Mammary epithelial cell (primary cell): ENCODE measurements at regions of chr17 and their contacts with region 1.

Region 1: DNA sequence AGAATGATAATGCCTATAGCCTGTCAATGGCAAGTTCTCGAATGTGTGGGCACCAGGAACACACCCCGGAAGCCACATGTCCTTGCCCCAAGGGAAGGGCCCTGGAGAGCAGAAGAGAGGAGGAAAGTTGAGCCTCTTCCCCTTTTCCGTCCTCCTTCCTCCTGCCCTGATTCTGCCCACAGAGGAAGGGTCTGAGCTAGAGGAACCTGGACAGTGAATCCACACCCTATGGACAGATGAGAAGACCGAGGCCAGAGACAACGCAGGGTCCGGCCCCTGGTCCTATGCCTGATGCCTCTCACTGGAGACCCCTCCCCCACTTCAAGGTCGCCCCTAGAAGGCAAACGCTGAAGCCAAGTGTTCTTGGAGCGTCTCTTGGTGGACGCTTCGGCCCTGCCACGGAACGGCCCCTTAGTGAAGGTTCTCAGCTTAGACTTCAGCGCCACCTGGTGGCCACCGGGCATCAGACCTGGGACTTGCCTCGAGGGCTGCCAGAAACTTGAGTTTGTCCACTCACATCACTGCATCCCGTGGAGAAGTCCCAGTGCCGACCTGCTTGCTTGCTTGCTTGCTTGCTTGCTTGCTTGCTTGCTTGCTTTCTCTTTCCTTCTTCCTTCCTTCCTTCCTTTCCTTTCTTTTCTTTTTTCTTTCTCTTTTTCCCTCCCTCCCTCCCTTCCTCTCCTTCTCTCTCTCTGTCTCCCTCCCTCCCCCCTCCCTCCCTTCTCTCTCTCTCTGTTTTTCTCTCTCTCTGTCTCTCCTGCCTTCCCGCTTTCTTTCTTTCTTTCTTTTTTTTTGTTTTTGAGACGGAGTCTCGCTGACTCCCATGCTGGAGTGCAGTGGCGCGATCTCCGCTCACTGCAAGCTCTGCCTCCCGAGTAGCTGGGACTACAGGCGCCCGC is 20.6 kb upstream of the SPNS3 start:
- DNase-seq: peak; percentile 71
- H3K4me3 ChIP-seq: no peak overlapping the region
- H3K27ac ChIP-seq: no peak overlapping the region
- H3K4me1 ChIP-seq: peaks cover 6% of the 10 kb centered on the region
- H3K27me3 ChIP-seq: no peaks in the 10 kb centered on the region
- CTCF ChIP-seq: peak; percentile 91 to 92

Region 2: DNA sequence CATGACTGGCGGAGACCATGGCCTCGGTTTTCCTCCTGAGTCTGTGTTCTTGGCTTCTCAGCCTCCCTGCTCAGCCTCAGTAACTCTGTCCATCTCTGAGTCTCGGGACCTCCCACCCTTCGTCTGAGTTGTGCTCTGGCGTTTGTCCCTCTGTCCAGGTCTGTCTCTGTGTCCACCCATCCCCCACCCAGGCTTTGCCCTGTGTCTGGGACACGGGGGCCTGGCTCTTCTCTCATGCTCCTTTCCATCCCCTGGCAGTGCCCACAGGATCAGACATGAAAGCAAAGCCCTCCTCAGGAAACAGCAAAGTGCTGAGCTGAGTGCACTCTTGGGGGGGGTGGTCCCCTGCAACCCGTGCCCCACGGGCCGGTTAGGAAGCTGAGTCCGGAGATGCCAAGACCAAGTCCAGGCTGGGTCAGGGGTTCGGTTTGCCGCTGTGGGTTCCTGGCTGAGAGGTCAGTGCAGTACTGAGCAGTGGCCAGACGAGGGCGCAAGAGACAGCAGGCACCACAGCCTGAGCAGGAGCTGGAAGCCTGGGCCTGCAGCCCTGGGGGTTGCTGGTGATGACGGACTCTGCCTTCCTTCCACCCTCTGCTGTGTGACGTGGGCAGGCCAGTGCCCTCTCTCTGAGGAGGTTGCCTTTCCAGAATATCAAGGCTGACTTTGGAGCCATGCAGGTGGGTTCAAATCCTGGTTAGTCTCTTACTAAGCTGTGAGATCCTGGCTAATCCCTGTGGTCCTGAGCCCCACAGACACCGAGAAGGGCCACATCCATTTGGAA is 499.5 kb before region 1 on chr17:
- CTCF ChIA-PET with region 1: no interaction called
- dilution Hi-C with region 1: no loop called
- in situ Hi-C with region 1: no loop called
- intact Hi-C with region 1: loop called (anchors 1 kb)
- DNase-seq: peak; percentile 35
- H3K4me3 ChIP-seq: no peak overlapping the region
- H3K27ac ChIP-seq: no peak overlapping the region
- H3K4me1 ChIP-seq: no peaks in the 10 kb centered on the region
- H3K27me3 ChIP-seq: no peaks in the 10 kb centered on the region
- CTCF ChIP-seq: peak; percentile 97 to 98

Region 3: GRCh38 chr17:4199818-4200402 is 213.3 kb before region 1 on chr17:
- CTCF ChIA-PET with region 1: interaction called, 4 read pairs
- dilution Hi-C with region 1: no loop called
- in situ Hi-C with region 1: loop called in 1 of 2 experiments (anchors 10 kb)
- intact Hi-C with region 1: loop called (anchors 1 kb)
- DNase-seq: peak; percentile 13
- H3K4me3 ChIP-seq: no peak overlapping the region
- H3K27ac ChIP-seq: no peak overlapping the region
- H3K4me1 ChIP-seq: no peaks in the 10 kb centered on the region
- H3K27me3 ChIP-seq: no peaks in the 10 kb centered on the region
- CTCF ChIP-seq: peak; percentile 78 to 80

Region 4: GRCh38 chr17:4263282-4264215 is 149.6 kb before region 1 on chr17 and contains the start of gene ANKFY1:
- CTCF ChIA-PET with region 1: no interaction called
- dilution Hi-C with region 1: no loop called
- in situ Hi-C with region 1: no loop called
- intact Hi-C with region 1: loop called (anchors 5 kb)
- DNase-seq: peak; percentile 90
- H3K4me3 ChIP-seq: peak within 1 kb of the TSS; percentile 71 to 97 (median 86)
- H3K27ac ChIP-seq: peak within 1 kb of the TSS; percentile 79
- H3K4me1 ChIP-seq: peaks cover 22% of the 10 kb centered on the region
- H3K27me3 ChIP-seq: no peaks in the 10 kb centered on the region
- CTCF ChIP-seq: peak in 1 of 2 donors; percentile 24
- total RNA-seq, gene ANKFY1: 45.4 to 46.2 TPM

Region 5: GRCh38 chr17:4366327-4367063 is 46.7 kb before region 1 on chr17 and contains the start of gene UBE2G1:
- CTCF ChIA-PET with region 1: no interaction called
- dilution Hi-C with region 1: no loop called
- in situ Hi-C with region 1: no loop called
- intact Hi-C with region 1: loop called (anchors 2 kb)
- DNase-seq: peak; percentile 97
- H3K4me3 ChIP-seq: peak within 1 kb of the TSS; percentile 82 to 87 (median 84)
- H3K27ac ChIP-seq: peak within 1 kb of the TSS; percentile 70
- H3K4me1 ChIP-seq: peaks cover 4% of the 10 kb centered on the region
- H3K27me3 ChIP-seq: no peaks in the 10 kb centered on the region
- CTCF ChIP-seq: peak; percentile 25 to 33
- total RNA-seq, gene UBE2G1: 60.8 to 93.0 TPM

Region 6: DNA sequence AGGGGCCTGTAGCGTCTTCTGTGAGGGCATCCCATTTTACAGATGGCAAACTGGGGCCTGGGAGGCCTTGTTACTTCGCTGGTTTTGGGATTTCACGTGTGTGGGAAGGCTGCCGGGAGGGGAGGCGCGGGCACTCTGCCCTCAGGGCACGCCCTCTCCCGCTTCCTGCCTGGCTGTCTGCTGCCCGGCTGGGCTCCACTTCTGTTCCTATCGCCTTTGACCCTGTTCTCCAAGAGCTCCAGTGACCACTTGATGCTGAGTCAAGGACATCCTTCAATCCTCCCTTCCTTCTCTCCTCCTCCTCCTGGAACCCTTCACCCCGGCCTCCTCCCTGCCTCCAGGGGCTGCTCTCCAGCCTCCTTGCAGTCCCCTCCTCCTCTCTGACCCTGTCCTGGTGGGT is 36.6 kb after region 1 on chr17:
- CTCF ChIA-PET with region 1: no interaction called
- dilution Hi-C with region 1: no loop called
- in situ Hi-C with region 1: no loop called
- intact Hi-C with region 1: no loop called
- DNase-seq: no peak
- H3K4me3 ChIP-seq: no peak overlapping the region
- H3K27ac ChIP-seq: no peak overlapping the region
- H3K4me1 ChIP-seq: no peaks in the 10 kb centered on the region
- H3K27me3 ChIP-seq: no peaks in the 10 kb centered on the region
- CTCF ChIP-seq: no peak